A549 (cell line): ENCODE measurements at regions of chr17 and their contacts with region 1.

Region 1: DNA sequence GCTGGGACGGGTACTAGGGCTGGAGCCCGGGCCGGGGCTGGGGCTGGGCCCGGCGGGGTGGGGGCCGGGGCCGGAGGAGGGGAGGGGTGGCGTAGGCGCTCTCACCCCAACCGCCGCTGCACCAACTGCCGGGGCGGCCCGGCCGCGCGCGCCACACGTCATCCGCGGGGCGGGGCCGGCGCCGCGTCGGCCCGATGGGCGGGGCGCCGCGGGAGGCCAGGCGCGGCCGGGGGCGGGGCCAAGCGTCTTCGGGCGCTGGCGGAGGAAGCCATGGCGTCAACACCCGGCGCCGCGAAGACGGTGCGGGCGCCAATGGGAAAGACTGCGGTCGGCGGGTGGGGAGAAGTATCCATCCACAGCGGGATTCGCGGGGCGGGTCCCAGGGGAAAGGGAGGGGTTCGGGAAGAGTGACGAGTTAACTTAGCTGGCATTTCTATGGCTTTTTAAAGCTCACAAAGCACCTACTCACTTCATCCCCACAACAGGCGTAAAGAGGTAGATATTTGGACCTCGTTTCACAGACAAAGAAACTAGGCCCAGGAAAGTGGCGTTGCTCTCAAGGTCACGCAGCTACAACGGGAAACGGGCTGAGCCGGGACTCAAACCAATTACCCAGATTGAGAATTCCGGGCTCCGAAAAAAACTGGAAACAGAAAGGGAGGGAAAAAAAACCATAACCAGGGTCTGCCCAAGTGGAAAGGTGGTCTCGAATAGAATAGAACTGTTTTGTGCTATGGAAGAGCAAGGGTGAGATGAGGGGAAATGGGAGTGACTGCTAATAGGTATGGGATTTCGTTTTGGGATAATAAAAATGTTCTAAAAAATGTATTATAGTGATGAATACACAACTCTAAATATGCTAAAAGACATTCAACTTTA is at the start of gene SPAG9:
- DNase-seq: peak; percentile 97
- ATAC-seq: peak; percentile 80 to 82
- H3K4me3 ChIP-seq: peak within 1 kb of the TSS; percentile 77
- H3K27ac ChIP-seq: peak within 1 kb of the TSS; percentile 91 to 92
- H3K4me1 ChIP-seq: peaks cover 46% of the 10 kb centered on the region
- CTCF ChIP-seq: no peak
- EP300 ChIP-seq: no peak
- POLR2A ChIP-seq: peak; percentile 46
- RAD21 ChIP-seq: peak; percentile 4 to 5; a peak in 1 of 5 replicates
- polyA plus RNA-seq, gene SPAG9: 69.6 and 71.1 TPM in 2 replicates

Region 2: GRCh38 chr17:51085185-51085805 is 35.7 kb before region 1 on chr17:
- CTCF ChIA-PET with region 1: no interaction called
- POLR2A ChIA-PET with region 1: interaction called, 20 read pairs
- DNase-seq: peak in 1 of 2 experiments; percentile 21
- ATAC-seq: peak in 1 of 2 experiments; percentile 12; a peak in 1 of 6 replicates
- H3K4me3 ChIP-seq: no peak overlapping the region
- H3K27ac ChIP-seq: peak overlapping the region; percentile 2 to 57; a peak in 3 of 6 replicates
- H3K4me1 ChIP-seq: peaks cover 30% of the 10 kb centered on the region
- CTCF ChIP-seq: no peak
- EP300 ChIP-seq: no peak
- POLR2A ChIP-seq: no peak
- RAD21 ChIP-seq: no peak

Region 3: GRCh38 chr17:51147650-51148049 is 26.7 kb after region 1 on chr17:
- CTCF ChIA-PET with region 1: interaction called, 119 read pairs
- POLR2A ChIA-PET with region 1: interaction called, 13 read pairs
- DNase-seq: no peak
- ATAC-seq: no peak
- H3K4me3 ChIP-seq: no peak overlapping the region
- H3K27ac ChIP-seq: no peak overlapping the region
- H3K4me1 ChIP-seq: peaks cover 19% of the 10 kb centered on the region; the same call in 2 of the 3 replicates
- CTCF ChIP-seq: no peak
- EP300 ChIP-seq: no peak
- POLR2A ChIP-seq: no peak
- RAD21 ChIP-seq: no peak

Region 4: GRCh38 chr17:51275381-51275780 is 154.4 kb after region 1 on chr17:
- CTCF ChIA-PET with region 1: no interaction called
- POLR2A ChIA-PET with region 1: no interaction called
- DNase-seq: no peak
- ATAC-seq: no peak
- H3K4me3 ChIP-seq: no peak overlapping the region
- H3K27ac ChIP-seq: no peak overlapping the region
- H3K4me1 ChIP-seq: no peaks in the 10 kb centered on the region
- CTCF ChIP-seq: no peak
- EP300 ChIP-seq: no peak
- POLR2A ChIP-seq: no peak
- RAD21 ChIP-seq: no peak